MCF 10A (cell line): ENCODE measurements at regions of chr18 and their contacts with region 1.

Region 1: GRCh38 chr18:32383050-32383819 is 87.4 kb downstream of the GAREM1 start:
- DNase-seq: peak; percentile 97
- H3K4me3 Mint-ChIP-seq: peak overlapping the region; percentile 40
- H3K27ac Mint-ChIP-seq: peak overlapping the region; percentile 98
- H3K4me1 Mint-ChIP-seq: peaks cover 69% of the 10 kb centered on the region
- H3K27me3 Mint-ChIP-seq: no peaks in the 10 kb centered on the region
- CTCF ChIP-seq: no peak

Region 2: GRCh38 chr18:32175265-32175664 is 208.0 kb before region 1 on chr18:
- CTCF ChIA-PET with region 1: no interaction called
- POLR2A ChIA-PET with region 1: no interaction called
- intact Hi-C with region 1: no loop called
- DNase-seq: no peak
- H3K4me3 Mint-ChIP-seq: no peak overlapping the region
- H3K27ac Mint-ChIP-seq: no peak overlapping the region
- H3K4me1 Mint-ChIP-seq: no peaks in the 10 kb centered on the region
- H3K27me3 Mint-ChIP-seq: no peaks in the 10 kb centered on the region
- CTCF ChIP-seq: no peak

Region 3: GRCh38 chr18:32289483-32290075 is 93.7 kb before region 1 on chr18:
- CTCF ChIA-PET with region 1: interaction called, 4 read pairs
- POLR2A ChIA-PET with region 1: interaction called, 14 read pairs
- intact Hi-C with region 1: no loop called
- DNase-seq: peak; percentile 82
- H3K4me3 Mint-ChIP-seq: no peak overlapping the region
- H3K27ac Mint-ChIP-seq: no peak overlapping the region
- H3K4me1 Mint-ChIP-seq: peaks cover 26% of the 10 kb centered on the region
- H3K27me3 Mint-ChIP-seq: no peaks in the 10 kb centered on the region
- CTCF ChIP-seq: peak; percentile 59

Region 4: DNA sequence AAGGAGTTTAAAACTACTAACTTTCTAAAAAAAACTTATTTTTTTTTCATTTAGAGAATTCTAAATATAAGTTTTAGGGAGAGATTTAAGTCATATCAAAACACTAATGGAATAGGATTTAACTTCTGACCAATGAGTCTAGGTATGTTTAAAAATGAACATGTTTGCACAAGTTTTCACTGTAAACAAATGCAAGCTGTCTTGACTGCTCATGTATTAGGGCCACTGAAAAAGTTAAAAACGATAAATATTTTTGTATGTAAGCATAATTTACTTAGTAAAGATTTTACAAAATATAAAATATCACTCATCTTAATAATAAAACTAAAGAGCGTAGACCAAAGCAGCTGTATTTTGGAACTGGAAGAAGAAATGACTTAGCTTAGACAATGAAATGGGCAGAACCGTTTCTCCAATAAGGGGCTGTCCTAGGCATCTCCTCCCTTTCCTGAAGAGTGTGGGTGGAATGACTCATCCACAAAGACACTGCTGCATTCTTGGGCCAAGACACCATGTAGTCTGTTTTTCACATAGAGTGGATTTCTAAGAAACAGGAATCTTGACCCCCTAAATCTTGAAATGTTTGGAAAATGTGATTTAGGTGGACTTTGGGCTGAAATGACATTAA is 74.6 kb before region 1 on chr18:
- CTCF ChIA-PET with region 1: interaction called, 4 read pairs
- POLR2A ChIA-PET with region 1: interaction called, 13 read pairs
- intact Hi-C with region 1: loop called (anchors 2 kb)
- DNase-seq: peak; percentile 93
- H3K4me3 Mint-ChIP-seq: no peak overlapping the region
- H3K27ac Mint-ChIP-seq: peak overlapping the region; percentile 49
- H3K4me1 Mint-ChIP-seq: peaks cover 19% of the 10 kb centered on the region
- H3K27me3 Mint-ChIP-seq: no peaks in the 10 kb centered on the region
- CTCF ChIP-seq: no peak

Region 5: GRCh38 chr18:32349728-32350395 is 33.4 kb before region 1 on chr18:
- CTCF ChIA-PET with region 1: interaction called, 3 read pairs
- POLR2A ChIA-PET with region 1: interaction called, 11 read pairs
- intact Hi-C with region 1: loop called (anchors 2 kb)
- DNase-seq: peak; percentile 94
- H3K4me3 Mint-ChIP-seq: peak overlapping the region; percentile 67
- H3K27ac Mint-ChIP-seq: peak overlapping the region; percentile 94
- H3K4me1 Mint-ChIP-seq: peaks cover 28% of the 10 kb centered on the region
- H3K27me3 Mint-ChIP-seq: no peaks in the 10 kb centered on the region
- CTCF ChIP-seq: no peak

Region 6: DNA sequence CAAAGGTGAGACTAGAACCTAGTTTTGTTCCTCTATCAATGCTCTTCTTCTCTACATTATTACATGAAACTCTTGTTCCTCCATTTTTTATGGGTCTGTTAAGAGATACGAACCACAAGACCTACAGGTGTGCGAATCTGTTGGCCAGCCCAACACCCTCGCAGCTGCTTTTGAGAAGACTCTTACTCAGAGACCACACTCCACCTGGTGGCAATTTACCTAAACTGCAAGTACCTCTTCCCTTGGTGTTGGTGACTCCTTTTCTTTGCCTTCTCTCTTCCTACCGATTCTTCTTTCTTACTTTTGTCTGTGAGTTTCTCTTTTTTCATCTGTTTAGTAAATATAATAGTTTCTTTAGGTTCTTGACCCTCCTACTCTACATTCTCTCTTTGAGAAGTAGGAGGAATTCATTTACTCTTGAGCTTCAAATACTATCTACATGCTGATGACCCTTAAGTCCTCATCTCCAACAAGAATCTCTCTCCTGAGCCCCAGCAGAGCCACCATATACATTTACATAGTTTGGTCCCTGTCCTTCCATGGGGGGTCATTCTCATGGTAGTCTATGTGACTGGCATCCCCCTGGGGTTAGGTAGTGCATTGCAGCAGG is 169.3 kb after region 1 on chr18:
- CTCF ChIA-PET with region 1: interaction called, 6 read pairs
- POLR2A ChIA-PET with region 1: interaction called, 4 read pairs
- intact Hi-C with region 1: loop called (anchors 10 kb)
- DNase-seq: peak; percentile 81
- H3K4me3 Mint-ChIP-seq: no peak overlapping the region
- H3K27ac Mint-ChIP-seq: no peak overlapping the region
- H3K4me1 Mint-ChIP-seq: peaks cover 6% of the 10 kb centered on the region
- H3K27me3 Mint-ChIP-seq: no peaks in the 10 kb centered on the region
- CTCF ChIP-seq: peak; percentile 57